ENCODE measurements at regions of chr6 and their contacts with region 1.

Region 1: DNA sequence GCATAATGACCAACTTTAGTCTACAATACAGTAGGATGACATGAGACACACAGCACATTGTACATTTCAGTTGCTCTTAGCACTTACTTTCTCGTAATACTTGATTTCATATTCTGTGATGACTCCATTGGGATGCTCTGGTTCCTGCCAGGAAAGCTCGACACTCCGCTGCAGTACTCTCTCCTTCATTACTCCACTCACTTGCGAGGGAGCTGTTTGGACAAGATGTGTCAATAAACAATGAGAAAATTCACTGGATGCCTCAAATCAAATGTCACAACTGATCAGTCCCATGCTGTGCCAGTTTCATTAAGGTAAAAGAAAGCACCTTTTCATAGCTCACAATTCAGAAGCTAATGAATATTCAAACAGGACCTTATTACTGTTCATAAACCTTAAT is 147.1 kb downstream of the EPHA7 start:
- DNase-seq: peak in 1 of 3 donors; percentile 3
- ATAC-seq: no peak
- H3K4me3 ChIP-seq: no peak overlapping the region
- H3K27ac ChIP-seq: no peak overlapping the region
- H3K4me1 ChIP-seq: peaks cover 2% of the 10 kb centered on the region
- H3K27me3 ChIP-seq: no peaks in the 10 kb centered on the region

Region 2: DNA sequence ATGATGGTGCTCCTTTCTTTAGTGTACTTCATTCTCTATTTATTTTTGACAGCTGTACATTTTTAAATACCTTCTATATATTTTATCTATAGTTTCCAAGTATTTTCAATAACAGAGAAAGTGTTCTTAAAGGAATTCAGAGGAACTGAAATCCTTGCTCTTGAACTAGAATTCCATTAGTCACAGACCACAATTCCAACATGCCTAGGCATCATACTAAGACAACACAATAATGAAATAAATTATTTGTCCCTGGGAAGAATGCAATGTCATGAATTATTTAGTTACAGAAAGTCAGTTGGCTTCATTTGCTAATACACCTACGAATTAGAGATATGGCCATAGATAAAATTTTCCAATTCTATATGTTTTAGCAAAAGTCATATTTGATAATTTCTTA is 524.1 kb before region 1 on chr6:
- intact Hi-C with region 1: no loop called
- DNase-seq: no peak
- ATAC-seq: no peak
- H3K4me3 ChIP-seq: no peak overlapping the region
- H3K27ac ChIP-seq: no peak overlapping the region
- H3K4me1 ChIP-seq: no peaks in the 10 kb centered on the region
- H3K27me3 ChIP-seq: no peaks in the 10 kb centered on the region

Region 3: DNA sequence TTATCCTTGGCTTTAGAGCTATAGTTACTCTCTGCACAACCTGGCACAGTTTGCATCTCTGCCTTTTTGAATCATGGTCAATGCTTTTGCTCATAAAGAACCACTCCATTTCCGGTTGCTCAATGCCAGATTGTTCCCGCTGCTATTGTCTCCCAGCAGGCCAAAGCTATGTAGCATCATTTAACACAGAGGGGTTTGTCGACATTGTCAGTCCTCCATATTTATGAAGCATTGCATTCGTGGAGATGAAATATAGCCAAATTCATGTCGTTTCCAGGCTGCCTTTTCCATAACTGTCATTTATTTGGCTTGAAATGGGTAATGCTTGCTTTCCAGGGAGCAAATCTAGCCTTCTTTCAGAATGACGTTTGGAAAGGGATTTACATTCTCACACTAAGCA is 451.6 kb before region 1 on chr6:
- intact Hi-C with region 1: no loop called
- DNase-seq: no peak
- ATAC-seq: no peak
- H3K4me3 ChIP-seq: no peak overlapping the region
- H3K27ac ChIP-seq: no peak overlapping the region
- H3K4me1 ChIP-seq: no peaks in the 10 kb centered on the region
- H3K27me3 ChIP-seq: no peaks in the 10 kb centered on the region

Region 4: DNA sequence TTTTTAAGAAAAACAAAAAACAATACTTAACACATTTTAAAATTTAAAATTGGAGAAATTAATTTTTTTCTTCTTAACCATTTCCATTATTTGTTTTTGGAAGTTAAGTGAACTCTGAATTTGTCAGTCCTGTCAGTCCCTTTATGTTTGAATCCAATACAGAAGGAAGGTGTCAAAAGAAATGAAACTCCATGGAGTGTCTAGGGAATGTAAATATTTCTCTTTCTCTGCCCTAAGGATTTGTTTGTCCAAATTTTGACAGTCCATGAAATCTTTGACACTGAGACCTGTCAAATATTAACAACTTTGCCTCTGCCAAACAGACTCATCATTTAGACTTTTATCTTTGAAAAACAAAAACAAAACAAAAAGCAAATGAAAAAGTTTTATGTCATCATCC is 19.3 kb before region 1 on chr6:
- intact Hi-C with region 1: loop called in 1 of 4 experiments (anchors 2 kb)
- DNase-seq: no peak
- ATAC-seq: no peak
- H3K4me3 ChIP-seq: no peak overlapping the region
- H3K27ac ChIP-seq: no peak overlapping the region
- H3K4me1 ChIP-seq: no peaks in the 10 kb centered on the region
- H3K27me3 ChIP-seq: no peaks in the 10 kb centered on the region